K562 (cell line): ENCODE measurements at regions of chr19 and their contacts with region 1.

Region 1: GRCh38 chr19:19138169-19138981 is at the start of gene TMEM161A:
- DNase-seq: peak; percentile 99 to 100 (median 99)
- ATAC-seq: peak; percentile 95
- H3K4me3 ChIP-seq: peak within 1 kb of the TSS; percentile 90
- H3K27ac ChIP-seq: peak within 1 kb of the TSS; percentile 91
- H3K4me1 ChIP-seq: peaks cover 15 to 29% of the 10 kb centered on the region in 2 experiments
- H3K27me3 ChIP-seq: no peaks in the 10 kb centered on the region; a peak in 1 of 5 replicates
- CTCF ChIP-seq: no peak
- EP300 ChIP-seq: no peak
- POLR2A ChIP-seq: peak; percentile 94
- RAD21 ChIP-seq: no peak
- polyA plus RNA-seq, gene TMEM161A: 0.63 to 4.7 TPM

Region 2: DNA sequence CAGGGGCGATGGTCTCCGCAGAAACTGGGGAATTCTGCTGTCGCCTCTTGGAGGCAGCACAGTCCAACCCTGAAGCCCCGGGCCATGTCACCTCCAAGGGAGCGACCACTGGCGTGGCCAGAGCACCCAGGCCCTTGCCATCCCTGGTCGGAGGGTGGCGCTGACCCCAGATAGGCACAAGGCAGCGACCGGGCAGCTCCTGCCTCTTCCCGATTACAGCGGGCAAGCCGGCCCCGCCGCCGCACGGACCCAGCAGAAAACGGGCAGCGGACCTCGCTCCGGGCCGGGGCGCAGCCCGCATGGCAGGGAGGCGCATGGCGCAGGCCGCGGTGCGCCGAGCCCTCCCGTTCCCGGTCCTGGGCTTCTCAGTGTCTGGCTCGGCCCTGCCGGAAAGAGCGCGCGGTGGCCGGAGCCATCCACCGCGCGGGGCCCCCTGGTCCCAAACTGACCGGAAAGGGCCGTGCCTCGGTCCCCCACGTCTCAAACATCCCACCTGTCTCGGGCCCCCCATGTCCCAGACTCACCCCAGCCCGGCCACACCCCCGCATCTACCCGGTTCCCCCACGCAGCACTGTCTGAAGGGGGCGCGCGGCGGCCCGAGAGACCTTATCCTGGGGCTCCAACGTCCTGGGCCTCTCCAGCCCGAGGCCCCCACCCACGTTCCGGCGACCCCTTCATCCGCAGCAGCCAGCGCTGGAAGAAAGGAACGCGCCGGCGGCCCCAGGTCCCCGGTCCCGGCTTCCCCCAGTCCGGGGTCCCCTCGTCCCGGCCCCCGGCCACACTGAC is 243.1 kb before region 1 on chr19:
- CTCF ChIA-PET with region 1: no interaction called
- POLR2A ChIA-PET with region 1: no interaction called
- in situ Hi-C with region 1: no loop called
- intact Hi-C with region 1: loop called (anchors 5 kb)
- DNase-seq: peak; percentile 69 to 72 (median 72)
- ATAC-seq: peak; percentile 81
- H3K4me3 ChIP-seq: peak overlapping the region; percentile 37
- H3K27ac ChIP-seq: no peak overlapping the region
- H3K4me1 ChIP-seq: peaks cover 12 to 64% of the 10 kb centered on the region in 2 experiments
- H3K27me3 ChIP-seq: peaks cover 0 to 5% of the 10 kb centered on the region in 2 experiments; a peak in 1 of 5 replicates
- CTCF ChIP-seq: peak; percentile 71 to 87 (median 80)
- EP300 ChIP-seq: no peak
- POLR2A ChIP-seq: no peak
- RAD21 ChIP-seq: peak; percentile 50 to 77

Region 3: DNA sequence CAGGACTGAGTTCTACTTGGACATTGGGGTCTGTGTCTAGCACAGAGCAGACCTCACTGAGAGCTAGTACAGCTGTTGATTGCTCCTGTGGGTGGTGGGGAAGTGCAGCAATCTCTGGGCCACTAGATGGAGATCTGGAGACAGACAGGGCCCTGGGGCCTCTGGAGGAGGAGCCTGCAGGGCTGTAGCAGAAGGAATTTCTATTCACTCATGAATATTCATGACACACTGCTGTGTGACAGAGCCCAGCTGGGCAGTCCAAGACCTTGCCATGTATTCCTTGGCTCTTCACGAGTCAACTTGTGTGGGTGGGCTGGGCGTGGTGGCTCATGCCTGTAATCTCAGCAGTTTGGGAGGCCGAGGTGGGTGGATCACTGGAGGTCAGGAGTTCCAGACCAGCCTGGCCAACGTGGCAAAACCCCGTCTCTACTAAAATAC is 142.6 kb before region 1 on chr19:
- CTCF ChIA-PET with region 1: interaction called, 4 read pairs
- POLR2A ChIA-PET with region 1: no interaction called
- in situ Hi-C with region 1: no loop called
- intact Hi-C with region 1: loop called (anchors 5 kb)
- DNase-seq: peak; percentile 55 to 77 (median 70)
- ATAC-seq: peak; percentile 97
- H3K4me3 ChIP-seq: no peak overlapping the region
- H3K27ac ChIP-seq: no peak overlapping the region
- H3K4me1 ChIP-seq: 0 out of 5 replicates have a peak, but pooled peaks cover 0 to 2% of the 10 kb centered on the region in 2 experiments
- H3K27me3 ChIP-seq: no peaks in the 10 kb centered on the region
- CTCF ChIP-seq: peak; percentile 63 to 72 (median 70)
- EP300 ChIP-seq: no peak
- POLR2A ChIP-seq: no peak
- RAD21 ChIP-seq: peak in 1 of 2 experiments; percentile 56; a peak in 2 of 4 replicates

Region 4: GRCh38 chr19:19063183-19064097 is 74.9 kb before region 1 on chr19 and contains the start of gene SLC25A42:
- CTCF ChIA-PET with region 1: interaction called, 3 read pairs
- POLR2A ChIA-PET with region 1: interaction called, 10 read pairs
- in situ Hi-C with region 1: loop called (anchors 5 kb)
- intact Hi-C with region 1: loop called (anchors 2 kb)
- DNase-seq: peak; percentile 97 to 99 (median 98)
- ATAC-seq: peak; percentile 87
- H3K4me3 ChIP-seq: peak within 1 kb of the TSS; percentile 74
- H3K27ac ChIP-seq: peak within 1 kb of the TSS; percentile 89
- H3K4me1 ChIP-seq: peaks cover 57 to 73% of the 10 kb centered on the region in 2 experiments
- H3K27me3 ChIP-seq: no peaks in the 10 kb centered on the region; a peak in 1 of 5 replicates
- CTCF ChIP-seq: no peak
- EP300 ChIP-seq: no peak
- POLR2A ChIP-seq: peak; percentile 84
- RAD21 ChIP-seq: no peak; a peak in 1 of 4 replicates
- polyA plus RNA-seq, gene SLC25A42: 0.59 to 2.0 TPM

Region 5: DNA sequence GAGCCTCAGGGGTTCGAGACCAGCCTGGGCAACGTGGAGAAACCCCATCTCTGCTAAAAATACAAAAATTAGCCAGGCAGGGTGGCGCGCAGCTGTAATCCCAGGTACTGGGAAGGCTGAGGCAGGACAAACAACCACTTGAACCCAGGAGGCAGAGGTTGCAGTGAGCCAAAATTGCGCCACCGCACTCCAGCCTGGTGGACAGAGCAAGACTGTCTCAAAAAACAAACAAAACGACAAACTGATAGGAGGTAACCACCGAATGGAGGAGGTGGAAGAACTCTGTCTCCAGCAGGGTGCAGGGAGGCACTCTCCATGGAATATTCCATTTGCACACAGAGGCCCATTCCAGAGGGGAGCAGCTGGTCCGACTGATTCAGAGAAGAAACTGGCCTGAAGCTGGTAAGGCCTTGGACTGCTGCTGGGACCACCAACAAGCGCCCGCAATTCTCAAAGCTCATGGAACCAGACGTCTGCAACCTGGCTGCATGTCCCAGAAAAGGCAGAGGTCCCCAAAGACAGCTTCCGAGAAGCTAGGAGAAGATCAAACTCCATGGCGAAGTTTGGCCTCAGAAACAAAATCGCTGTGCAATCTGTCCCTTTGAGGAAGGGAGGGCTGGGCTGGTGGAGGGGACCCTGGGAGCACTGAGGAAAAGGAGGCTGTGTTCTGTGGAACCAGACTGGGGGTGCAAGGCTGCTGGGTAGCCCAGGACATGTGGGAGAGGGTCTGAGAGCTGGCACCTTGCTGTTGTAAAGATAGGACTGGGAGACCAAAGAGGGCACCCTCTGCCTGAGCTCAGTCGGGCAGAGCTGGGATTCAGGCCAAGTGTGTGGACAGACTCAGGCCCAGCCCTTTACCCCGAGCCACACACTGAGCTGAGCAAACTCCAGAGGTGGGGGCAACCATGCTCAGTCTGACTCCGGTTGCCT is 39.4 kb before region 1 on chr19:
- CTCF ChIA-PET with region 1: no interaction called
- POLR2A ChIA-PET with region 1: no interaction called
- in situ Hi-C with region 1: no loop called
- intact Hi-C with region 1: no loop called
- DNase-seq: no peak
- ATAC-seq: peak; percentile 23; the same call in 1 of the 3 replicates
- H3K4me3 ChIP-seq: no peak overlapping the region
- H3K27ac ChIP-seq: no peak overlapping the region
- H3K4me1 ChIP-seq: peaks cover 0 to 21% of the 10 kb centered on the region in 2 experiments; a peak in 3 of 5 replicates
- H3K27me3 ChIP-seq: no peaks in the 10 kb centered on the region
- CTCF ChIP-seq: no peak
- EP300 ChIP-seq: no peak
- POLR2A ChIP-seq: no peak
- RAD21 ChIP-seq: no peak

Region 6: GRCh38 chr19:19170053-19170872 is 31.9 kb after region 1 on chr19 and contains the start of gene MEF2B:
- CTCF ChIA-PET with region 1: no interaction called
- POLR2A ChIA-PET with region 1: interaction called, 4 read pairs
- in situ Hi-C with region 1: no loop called
- intact Hi-C with region 1: loop called (anchors 5 kb)
- DNase-seq: peak; percentile 94 to 98 (median 98)
- ATAC-seq: peak; percentile 94
- H3K4me3 ChIP-seq: peak within 1 kb of the TSS; percentile 34
- H3K27ac ChIP-seq: peak within 1 kb of the TSS; percentile 40; the same call in 1 of the 3 replicates
- H3K4me1 ChIP-seq: peaks cover 31 to 34% of the 10 kb centered on the region in 2 experiments; a peak in 4 of 5 replicates
- H3K27me3 ChIP-seq: no peaks in the 10 kb centered on the region
- CTCF ChIP-seq: no peak
- EP300 ChIP-seq: no peak
- POLR2A ChIP-seq: 0 out of 2 replicates have a peak, but pooled peaks have one; percentile 19
- RAD21 ChIP-seq: no peak
- polyA plus RNA-seq, gene MEF2B: not detected